Vagina (tissue), 2 donors: ENCODE measurements at regions of chr5 and their contacts with region 1.

Region 1: DNA sequence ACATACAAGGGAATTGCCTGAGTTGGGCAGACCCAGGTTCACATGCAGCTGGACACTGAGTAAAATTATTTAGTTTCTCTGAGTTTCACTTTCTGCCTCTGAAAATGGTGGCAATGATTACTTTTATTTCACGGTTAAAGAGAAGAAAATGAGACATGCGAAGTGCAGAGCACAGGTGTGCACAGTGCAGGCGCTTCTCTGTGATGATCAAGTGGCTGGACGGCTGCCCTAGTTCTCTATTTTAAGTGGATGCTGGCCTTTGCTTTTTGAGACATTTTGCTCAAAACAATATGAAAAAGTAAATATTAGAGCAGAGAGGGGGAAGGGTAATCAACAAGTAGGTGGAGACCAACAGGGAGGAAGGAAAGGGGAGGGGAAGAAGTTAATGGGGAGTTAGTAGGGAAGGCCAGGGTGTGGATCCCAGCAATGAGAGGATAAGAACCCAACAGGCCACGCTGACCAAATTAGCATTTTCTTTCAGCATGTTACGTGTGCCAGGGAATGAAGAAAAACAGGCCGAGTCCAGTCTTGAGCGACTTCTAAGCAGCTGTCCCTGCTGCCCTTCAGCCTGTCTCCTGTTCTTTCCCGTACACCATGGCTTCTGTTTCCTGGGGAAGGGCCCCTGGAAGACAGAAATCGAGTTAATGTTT is 16.1 kb downstream of the SNX18 start:
- DNase-seq: no peak
- H3K4me3 ChIP-seq: no peak overlapping the region
- H3K27ac ChIP-seq: peak overlapping the region; percentile 70
- H3K4me1 ChIP-seq: peaks cover 77% of the 10 kb centered on the region
- H3K27me3 ChIP-seq: no peaks in the 10 kb centered on the region
- CTCF ChIP-seq: no peak
- POLR2A ChIP-seq: no peak

Region 2: GRCh38 chr5:52956915-52957747 is 1576.5 kb before region 1 on chr5:
- intact Hi-C with region 1: no loop called
- DNase-seq: no peak
- H3K4me3 ChIP-seq: no peak overlapping the region
- H3K27ac ChIP-seq: no peak overlapping the region
- H3K4me1 ChIP-seq: no peaks in the 10 kb centered on the region
- H3K27me3 ChIP-seq: no peaks in the 10 kb centered on the region
- CTCF ChIP-seq: no peak
- POLR2A ChIP-seq: no peak

Region 3: DNA sequence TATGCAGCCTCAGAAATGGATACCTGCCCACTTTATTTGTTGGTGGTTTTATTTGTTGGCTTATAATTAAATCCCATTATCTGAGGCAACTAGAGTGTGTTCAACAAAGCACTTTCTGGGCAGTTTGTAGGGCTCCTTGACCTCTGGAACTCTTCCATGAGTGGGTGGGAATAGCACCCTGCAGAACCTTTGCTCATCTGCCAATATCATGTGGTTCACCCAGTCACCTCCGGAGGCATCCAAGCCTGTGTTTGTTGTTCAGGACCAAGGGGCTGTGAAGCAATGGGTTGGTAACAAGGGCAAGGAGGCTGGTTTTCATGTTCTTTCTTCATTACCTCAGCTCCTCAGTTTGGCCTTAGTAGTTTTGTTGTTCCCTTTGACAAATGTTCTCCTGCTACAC is 659.3 kb before region 1 on chr5:
- intact Hi-C with region 1: no loop called
- DNase-seq: no peak
- H3K4me3 ChIP-seq: no peak overlapping the region
- H3K27ac ChIP-seq: no peak overlapping the region
- H3K4me1 ChIP-seq: no peaks in the 10 kb centered on the region
- H3K27me3 ChIP-seq: no peaks in the 10 kb centered on the region
- CTCF ChIP-seq: no peak
- POLR2A ChIP-seq: no peak

Region 4: DNA sequence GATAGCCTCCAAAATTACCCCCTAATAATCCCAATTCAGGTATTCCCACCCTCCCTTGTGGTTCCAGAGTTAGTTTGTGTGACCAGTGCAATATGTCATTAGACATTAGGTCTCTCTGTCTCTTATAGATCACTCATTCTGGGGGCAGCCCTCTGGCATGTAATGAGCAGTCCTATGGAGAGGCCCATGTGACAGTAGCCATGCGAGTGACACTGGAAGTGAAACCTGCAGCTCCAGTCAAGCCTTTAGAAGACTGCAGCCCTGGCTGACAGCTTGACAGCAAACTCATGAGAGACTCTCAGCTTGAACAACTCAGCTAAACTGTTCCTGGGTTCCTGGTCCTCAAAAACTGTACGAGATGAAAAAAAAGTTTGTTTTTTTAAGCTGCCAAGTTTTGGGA is 132.2 kb before region 1 on chr5:
- intact Hi-C with region 1: no loop called
- DNase-seq: no peak
- H3K4me3 ChIP-seq: no peak overlapping the region
- H3K27ac ChIP-seq: no peak overlapping the region
- H3K4me1 ChIP-seq: peaks cover 16% of the 10 kb centered on the region
- H3K27me3 ChIP-seq: no peaks in the 10 kb centered on the region
- CTCF ChIP-seq: no peak
- POLR2A ChIP-seq: no peak

Region 5: DNA sequence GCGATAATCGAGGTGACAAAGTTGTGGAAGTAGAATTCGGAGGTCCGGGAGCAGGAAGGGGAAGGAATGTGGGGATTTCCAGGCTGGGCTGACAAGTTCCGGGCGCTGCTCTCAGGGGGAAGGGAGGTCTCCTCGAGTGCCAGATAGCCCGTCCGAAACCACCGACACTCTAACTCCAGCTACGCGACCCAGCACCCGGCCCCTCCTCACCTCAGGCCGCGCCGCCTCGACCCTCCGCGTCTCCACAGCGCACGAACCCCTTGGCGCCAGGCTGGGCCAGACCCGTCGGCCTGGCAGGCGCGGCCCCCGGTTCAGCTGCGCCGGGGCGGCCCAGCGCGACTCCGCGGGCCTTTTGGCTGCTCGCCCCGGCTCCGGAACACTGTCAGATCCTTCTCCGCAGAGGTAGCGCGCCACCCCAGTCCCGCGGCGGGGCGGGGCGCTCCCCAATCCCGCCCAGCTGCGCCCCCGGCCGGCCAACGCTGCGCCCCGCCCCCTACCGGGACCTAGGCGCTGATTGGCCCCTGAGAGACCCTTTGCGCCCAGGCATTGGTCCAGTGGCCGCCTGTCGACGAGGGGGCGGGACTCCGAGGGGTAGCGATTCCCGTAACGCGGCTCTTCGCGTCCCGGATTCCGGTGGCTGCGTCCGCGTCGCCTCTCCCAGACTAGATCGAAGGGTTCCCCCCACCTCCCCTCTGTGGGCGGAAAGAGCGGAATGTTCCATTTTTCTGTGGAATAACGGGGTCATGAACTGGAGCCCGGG is 1461.1 kb after region 1 on chr5 and contains the start of gene IL6ST:
- intact Hi-C with region 1: loop called (anchors 5 kb)
- DNase-seq: peak in 1 of 2 donors; percentile 98
- H3K4me3 ChIP-seq: peak within 1 kb of the TSS; percentile 85 to 97
- H3K27ac ChIP-seq: peak within 1 kb of the TSS; percentile 99
- H3K4me1 ChIP-seq: peaks cover 55% of the 10 kb centered on the region
- H3K27me3 ChIP-seq: no peaks in the 10 kb centered on the region
- CTCF ChIP-seq: peak in 1 of 3 experiments; percentile 3
- POLR2A ChIP-seq: peak in 1 of 2 donors; percentile 90
- total RNA-seq, gene IL6ST: 312 TPM